Calu3 (cell line): ENCODE measurements at regions of chr5 and their contacts with region 1.

Region 1: DNA sequence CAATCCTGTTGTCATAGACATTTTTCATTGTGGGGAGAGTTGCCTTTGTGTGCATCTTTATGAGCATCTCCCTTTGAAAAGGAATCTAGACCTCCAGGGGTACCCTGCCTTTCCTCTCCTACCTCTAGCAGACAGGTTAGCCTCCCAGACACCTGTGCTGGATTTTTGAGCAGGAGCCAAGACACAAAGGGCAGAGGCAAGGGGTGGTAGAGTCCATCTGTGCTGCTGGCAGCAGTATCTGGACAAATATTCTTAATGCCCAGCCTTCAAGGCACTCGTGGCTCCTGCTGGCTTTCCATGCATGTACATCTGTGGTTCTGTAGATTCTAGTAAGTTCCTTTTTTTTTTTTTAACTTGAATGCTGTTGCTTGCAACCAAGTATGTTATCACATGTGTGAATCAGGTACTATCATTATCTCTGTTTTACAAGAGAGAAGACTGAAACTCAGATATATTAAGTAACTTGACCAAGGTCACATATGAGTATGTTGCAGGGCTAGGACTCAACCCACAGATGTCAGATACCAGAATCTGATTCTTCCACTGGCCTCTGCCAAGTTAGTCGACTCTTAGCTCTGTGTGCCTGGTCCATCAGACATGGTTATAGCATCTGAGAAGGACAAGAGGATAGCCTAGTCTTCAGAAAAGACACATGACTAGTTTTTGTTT is 32.9 kb upstream of the GPR151 start:
- DNase-seq: no peak
- H3K4me3 Mint-ChIP-seq: no peak overlapping the region
- H3K27ac Mint-ChIP-seq: no peak overlapping the region
- H3K4me1 Mint-ChIP-seq: no peaks in the 10 kb centered on the region
- H3K27me3 Mint-ChIP-seq: no peaks in the 10 kb centered on the region
- CTCF ChIP-seq: no peak

Region 2: GRCh38 chr5:145637396-145637795 is 911.5 kb before region 1 on chr5:
- CTCF ChIA-PET with region 1: interaction called, 14 read pairs
- intact Hi-C with region 1: no loop called
- DNase-seq: no peak
- H3K4me3 Mint-ChIP-seq: no peak overlapping the region
- H3K27ac Mint-ChIP-seq: no peak overlapping the region
- H3K4me1 Mint-ChIP-seq: peaks cover 14% of the 10 kb centered on the region
- H3K27me3 Mint-ChIP-seq: no peaks in the 10 kb centered on the region
- CTCF ChIP-seq: no peak

Region 3: GRCh38 chr5:146409054-146409671 is 139.8 kb before region 1 on chr5:
- CTCF ChIA-PET with region 1: no interaction called
- intact Hi-C with region 1: no loop called
- DNase-seq: no peak
- H3K4me3 Mint-ChIP-seq: no peak overlapping the region
- H3K27ac Mint-ChIP-seq: no peak overlapping the region
- H3K4me1 Mint-ChIP-seq: no peaks in the 10 kb centered on the region
- H3K27me3 Mint-ChIP-seq: peaks cover 4% of the 10 kb centered on the region
- CTCF ChIP-seq: no peak

Region 4: DNA sequence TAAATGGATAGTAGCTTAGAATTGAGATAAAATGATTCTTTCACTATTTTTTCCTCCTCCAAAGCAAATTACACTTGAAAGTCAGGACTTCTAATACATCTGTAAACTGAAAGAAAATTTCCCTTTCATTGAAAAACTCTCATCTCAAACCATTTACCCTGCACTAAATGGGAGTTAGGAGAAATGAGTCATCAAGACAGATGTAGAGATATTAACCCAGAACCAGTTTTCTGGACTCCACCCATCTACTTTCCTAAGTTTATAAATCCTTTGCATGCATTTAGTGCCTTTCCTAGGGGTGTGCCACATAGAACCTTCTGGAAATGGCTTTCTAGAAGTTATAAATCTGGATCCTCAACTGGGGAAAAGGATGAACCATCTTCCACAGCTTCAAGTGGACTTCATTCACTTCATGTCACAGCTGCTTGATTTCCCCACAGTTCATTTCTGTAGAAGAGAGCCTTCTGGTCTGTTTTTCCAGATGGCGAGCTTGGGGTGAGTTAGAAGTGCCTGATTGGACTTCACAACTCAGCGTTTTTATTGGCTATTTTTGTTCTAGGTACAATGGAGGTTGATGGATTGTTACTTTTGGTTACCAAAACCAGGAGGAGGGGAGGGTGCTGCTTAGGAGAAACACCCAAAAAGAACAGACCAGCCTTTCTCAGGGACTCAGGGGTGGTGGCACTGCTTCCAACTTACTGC is 39.6 kb after region 1 on chr5:
- CTCF ChIA-PET with region 1: no interaction called
- intact Hi-C with region 1: no loop called
- DNase-seq: no peak
- H3K4me3 Mint-ChIP-seq: no peak overlapping the region
- H3K27ac Mint-ChIP-seq: no peak overlapping the region
- H3K4me1 Mint-ChIP-seq: no peaks in the 10 kb centered on the region
- H3K27me3 Mint-ChIP-seq: peaks cover 15% of the 10 kb centered on the region
- CTCF ChIP-seq: no peak